Transverse colon (tissue), 4 donors: ENCODE measurements at regions of chr18 and their contacts with region 1.

Region 1: DNA sequence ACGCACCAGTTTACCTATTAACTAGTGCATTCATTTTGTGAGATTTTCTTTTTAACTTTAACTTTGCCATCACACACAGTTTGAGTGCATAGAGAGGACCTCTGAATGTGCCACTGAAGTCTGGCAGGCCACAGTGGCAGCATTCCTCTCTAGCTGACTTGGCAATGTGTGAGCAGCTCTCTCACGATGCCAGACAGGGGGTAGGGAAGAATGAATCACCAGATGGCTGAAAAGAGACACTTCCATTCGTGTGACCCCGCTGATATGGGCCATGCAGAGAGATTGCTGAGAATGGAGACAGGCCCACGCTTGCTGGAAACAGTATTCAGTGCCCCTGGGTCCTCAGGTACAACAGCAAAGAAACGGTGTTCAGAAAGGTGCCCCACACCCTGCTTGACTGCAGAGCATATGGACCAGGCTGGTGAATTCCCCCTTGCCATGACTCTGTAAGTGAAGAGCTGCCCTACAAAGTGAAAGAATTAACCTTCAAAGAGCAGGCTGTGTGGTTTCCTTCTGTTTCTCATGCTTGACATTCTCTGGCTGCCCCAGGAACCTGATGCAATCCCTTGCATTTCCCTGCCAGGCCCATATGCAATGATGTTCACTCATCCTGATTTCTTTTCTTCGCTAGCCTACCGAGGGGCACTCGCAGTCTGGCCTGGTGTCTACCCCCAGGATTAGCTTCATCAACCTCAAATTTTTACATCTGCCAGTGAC is 236.1 kb downstream of the CDH20 start:
- DNase-seq: no peak
- H3K4me3 ChIP-seq: no peak overlapping the region
- H3K27ac ChIP-seq: no peak overlapping the region
- H3K4me1 ChIP-seq: no peaks in the 10 kb centered on the region
- H3K27me3 ChIP-seq: no peaks in the 10 kb centered on the region
- CTCF ChIP-seq: no peak
- EP300 ChIP-seq: no peak
- POLR2A ChIP-seq: no peak

Region 2: DNA sequence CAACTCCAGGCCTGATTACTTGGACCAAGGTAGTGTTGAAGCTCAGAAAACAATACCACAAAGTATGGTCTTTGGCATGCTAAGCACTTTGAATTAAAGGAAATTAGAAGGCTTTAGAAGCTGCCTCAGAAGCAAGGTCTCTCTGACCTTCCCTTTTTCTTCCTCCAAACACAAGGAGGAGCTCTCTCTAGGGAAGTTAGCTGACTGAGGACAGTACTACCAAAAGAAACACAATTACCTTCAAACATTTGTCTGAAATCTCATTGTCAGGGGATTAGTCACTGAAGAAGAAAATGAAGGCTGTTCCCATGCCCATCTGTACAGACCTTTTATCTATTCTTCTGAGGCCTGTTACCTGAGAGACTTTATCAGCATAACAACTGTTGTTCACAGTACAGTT is 43.2 kb after region 1 on chr18:
- in situ Hi-C with region 1: no loop called
- intact Hi-C with region 1: loop called (anchors 1 kb)
- DNase-seq: no peak
- H3K4me3 ChIP-seq: no peak overlapping the region
- H3K27ac ChIP-seq: no peak overlapping the region
- H3K4me1 ChIP-seq: no peaks in the 10 kb centered on the region
- H3K27me3 ChIP-seq: no peaks in the 10 kb centered on the region
- CTCF ChIP-seq: no peak
- EP300 ChIP-seq: no peak
- POLR2A ChIP-seq: no peak